Calu3 (cell line): ENCODE measurements at regions of chr1 and their contacts with region 1.

Region 1: GRCh38 chr1:55781944-55782482 is 566.8 kb upstream of the USP24 start:
- DNase-seq: no peak
- H3K4me3 Mint-ChIP-seq: no peak overlapping the region
- H3K27ac Mint-ChIP-seq: no peak overlapping the region
- H3K4me1 Mint-ChIP-seq: no peaks in the 10 kb centered on the region
- H3K27me3 Mint-ChIP-seq: no peaks in the 10 kb centered on the region
- CTCF ChIP-seq: no peak

Region 2: DNA sequence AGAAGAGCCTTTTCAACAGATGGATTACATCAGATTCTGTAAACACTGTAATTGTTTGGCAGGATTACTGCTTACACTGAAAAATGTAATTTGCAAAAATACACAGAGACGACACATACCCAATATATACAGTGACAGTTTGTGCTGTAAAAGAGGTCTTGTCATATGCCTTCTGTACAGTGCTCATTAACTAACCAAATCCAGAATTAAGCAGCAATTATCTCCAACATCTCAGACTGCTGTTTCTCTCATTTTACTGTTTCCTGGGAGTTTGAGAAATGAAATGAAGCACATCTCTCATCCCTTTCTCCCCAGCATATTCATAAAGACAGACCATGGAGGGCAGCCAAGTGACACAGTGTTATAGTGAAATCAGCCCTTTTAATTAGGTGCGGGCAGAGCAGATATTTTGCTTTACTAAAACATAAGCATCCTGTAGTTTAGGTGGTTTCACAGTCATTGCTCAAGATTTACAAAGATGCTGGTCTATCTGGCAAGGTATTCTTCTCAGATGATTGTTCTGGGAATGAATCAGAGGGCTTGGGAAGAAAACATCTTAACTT is 51.6 kb after region 1 on chr1:
- CTCF ChIA-PET with region 1: no interaction called
- intact Hi-C with region 1: no loop called
- DNase-seq: no peak
- H3K4me3 Mint-ChIP-seq: no peak overlapping the region
- H3K27ac Mint-ChIP-seq: no peak overlapping the region
- H3K4me1 Mint-ChIP-seq: no peaks in the 10 kb centered on the region
- H3K27me3 Mint-ChIP-seq: no peaks in the 10 kb centered on the region
- CTCF ChIP-seq: no peak

Region 3: DNA sequence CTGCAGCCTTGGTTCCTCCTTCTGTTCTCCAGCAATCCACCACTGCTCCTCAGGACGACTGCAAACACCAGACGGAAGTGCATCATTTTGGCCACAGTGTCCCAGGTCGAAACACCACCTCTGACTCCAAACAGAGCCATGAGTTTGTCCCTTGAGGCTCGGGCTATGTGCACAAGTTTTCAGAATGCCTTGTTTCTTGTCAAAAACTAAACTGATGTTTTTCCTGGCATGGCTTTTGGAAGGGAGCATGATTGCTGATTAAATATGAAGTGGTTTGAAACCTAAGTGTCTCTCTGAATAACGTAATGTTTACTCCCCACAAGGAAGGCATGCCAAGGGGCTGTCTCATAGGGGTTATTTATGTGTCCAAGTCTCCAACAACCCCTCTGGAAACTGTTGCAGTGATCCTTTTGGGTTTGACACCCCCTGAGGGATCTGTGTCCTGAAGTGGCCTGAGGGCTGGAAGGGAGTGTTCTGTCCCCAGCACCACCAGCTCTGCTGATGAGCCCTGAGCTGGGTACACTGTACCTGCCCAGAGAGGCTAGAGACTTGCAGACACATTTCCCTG is 664.6 kb after region 1 on chr1:
- CTCF ChIA-PET with region 1: no interaction called
- intact Hi-C with region 1: loop called (anchors 5 kb)
- DNase-seq: no peak
- H3K4me3 Mint-ChIP-seq: no peak overlapping the region
- H3K27ac Mint-ChIP-seq: no peak overlapping the region
- H3K4me1 Mint-ChIP-seq: peaks cover 18% of the 10 kb centered on the region
- H3K27me3 Mint-ChIP-seq: no peaks in the 10 kb centered on the region
- CTCF ChIP-seq: no peak